K562 (cell line): ENCODE measurements at regions of chr5 and their contacts with region 1.

Region 1: DNA sequence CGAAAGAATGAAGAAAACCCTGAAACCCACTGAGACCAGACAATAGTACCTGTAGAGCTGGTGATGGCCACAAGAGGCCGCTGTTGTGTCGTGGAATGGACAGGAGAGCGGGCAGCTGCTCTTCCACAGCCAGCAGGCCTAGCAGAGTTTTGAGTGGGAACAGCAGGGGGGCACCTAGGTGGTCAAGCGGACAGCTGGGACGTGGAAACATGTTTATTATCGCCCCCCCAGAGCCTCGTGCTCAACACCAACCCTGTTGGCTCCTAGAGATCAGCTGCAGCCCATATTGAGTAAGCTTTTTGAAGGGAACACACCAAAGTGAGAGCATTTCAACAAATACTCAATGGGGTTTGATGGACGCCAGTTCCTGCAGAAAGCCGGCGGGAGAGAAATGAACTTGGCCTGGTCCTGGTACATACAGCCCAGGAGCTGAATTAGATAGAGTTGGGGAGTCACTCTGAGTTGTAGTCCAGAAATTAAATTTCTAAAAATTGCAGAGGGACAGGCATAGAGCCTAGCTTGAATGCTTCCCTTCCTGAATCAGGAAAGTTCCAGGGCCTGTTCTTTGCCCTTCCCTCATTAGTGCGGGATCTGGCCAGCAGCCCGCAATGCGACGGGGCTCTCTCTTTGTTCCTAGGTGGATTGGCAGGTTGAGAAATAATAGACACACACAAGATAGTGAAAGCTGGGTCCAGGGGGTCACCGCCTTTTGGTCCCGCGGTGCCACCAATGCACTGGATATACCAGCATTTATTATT is 33.8 kb downstream of the MFAP3 start:
- DNase-seq: peak; percentile 83 to 86 (median 84)
- ATAC-seq: peak; percentile 98
- H3K4me3 ChIP-seq: no peak overlapping the region
- H3K27ac ChIP-seq: no peak overlapping the region
- H3K4me1 ChIP-seq: no peaks in the 10 kb centered on the region; a peak in 1 of 5 replicates
- H3K27me3 ChIP-seq: no peaks in the 10 kb centered on the region; a peak in 1 of 5 replicates
- CTCF ChIP-seq: peak; percentile 93 to 97 (median 96)
- EP300 ChIP-seq: no peak
- POLR2A ChIP-seq: no peak
- RAD21 ChIP-seq: peak; percentile 96 to 97

Region 2: DNA sequence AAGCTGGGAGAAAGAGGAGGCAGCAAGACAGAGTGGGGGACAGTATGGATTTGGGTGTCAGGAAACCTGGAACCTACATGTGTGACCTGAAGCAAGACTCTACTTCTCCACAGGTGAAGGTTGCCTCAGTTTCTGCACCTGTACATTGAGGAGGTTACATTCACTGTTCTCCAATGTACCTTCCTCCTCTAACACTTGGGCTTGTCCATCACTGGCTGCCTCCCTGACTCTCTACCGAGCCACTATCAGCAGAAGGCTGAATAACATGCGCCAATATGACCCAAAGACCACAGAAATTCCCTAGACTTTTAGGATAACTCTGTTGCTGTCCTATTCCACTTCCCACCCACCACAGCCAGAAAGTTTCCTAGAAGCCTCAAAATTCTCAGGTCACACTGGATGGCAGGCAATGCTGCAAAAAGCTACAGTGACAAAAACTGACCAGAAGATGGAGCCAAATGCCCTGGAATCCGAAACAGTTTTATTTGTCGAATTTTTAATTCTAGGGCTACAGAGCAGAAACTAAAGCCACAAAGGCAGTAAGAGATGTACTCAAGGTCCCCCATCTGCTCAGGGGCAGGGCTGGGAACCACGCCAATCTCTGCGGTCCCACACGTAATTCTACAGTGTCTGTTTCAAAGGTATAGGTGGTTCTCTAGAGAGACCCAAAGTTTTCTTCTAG is 98.3 kb before region 1 on chr5:
- CTCF ChIA-PET with region 1: no interaction called
- POLR2A ChIA-PET with region 1: no interaction called
- in situ Hi-C with region 1: no loop called
- intact Hi-C with region 1: loop called (anchors 1 kb)
- DNase-seq: peak; percentile 38 to 60 (median 48)
- ATAC-seq: peak; percentile 78
- H3K4me3 ChIP-seq: no peak overlapping the region
- H3K27ac ChIP-seq: no peak overlapping the region
- H3K4me1 ChIP-seq: peaks cover 0 to 27% of the 10 kb centered on the region in 2 experiments; a peak in 3 of 5 replicates
- H3K27me3 ChIP-seq: peaks cover 1 to 3% of the 10 kb centered on the region in 2 experiments; a peak in 2 of 5 replicates
- CTCF ChIP-seq: peak; percentile 62 to 92 (median 76)
- EP300 ChIP-seq: no peak
- POLR2A ChIP-seq: no peak
- RAD21 ChIP-seq: peak; percentile 85 to 90

Region 3: DNA sequence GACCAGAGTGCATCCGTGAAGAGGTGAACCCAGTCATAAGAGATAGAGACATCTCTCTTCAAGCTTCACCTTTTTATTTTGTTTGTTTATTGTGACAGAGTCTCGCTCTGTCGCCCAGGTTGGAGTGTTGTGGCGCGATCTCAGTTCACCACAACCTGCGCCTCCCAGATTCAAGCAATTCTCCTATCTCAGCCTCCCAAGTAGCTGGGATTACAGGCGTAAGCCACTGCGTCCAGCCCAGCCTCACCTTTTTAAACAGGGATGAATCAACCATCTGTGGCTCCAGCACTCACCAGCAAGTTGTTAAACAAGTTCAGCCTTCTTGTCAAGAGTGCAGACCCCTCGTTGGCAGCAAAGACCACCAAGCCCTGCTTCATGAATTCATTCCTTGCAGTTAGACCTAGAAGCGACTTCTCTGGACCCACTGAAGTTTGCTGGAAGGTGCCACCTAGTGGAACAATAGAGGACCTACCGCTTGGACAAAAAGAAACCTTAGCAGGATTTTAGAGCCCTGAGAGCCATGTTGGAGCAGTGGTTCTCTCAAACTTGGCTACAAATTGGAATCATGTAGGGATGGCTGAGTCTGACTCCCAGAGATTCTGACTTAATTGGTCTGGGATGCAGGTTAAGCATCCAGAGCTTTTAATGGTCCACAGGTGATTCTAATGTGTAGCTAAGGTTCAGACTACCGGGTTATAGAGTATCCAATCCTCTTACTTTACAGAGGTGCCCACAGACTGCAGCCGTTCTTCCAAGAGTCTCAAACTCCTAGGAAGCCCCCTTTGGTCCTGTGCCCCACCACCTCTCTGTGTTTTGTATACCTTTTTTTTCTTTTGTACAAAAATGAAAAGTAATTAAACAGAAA is 107.5 kb after region 1 on chr5:
- CTCF ChIA-PET with region 1: interaction called, 7 read pairs
- POLR2A ChIA-PET with region 1: no interaction called
- in situ Hi-C with region 1: no loop called
- intact Hi-C with region 1: loop called (anchors 1 kb)
- DNase-seq: peak; percentile 62 to 67 (median 65)
- ATAC-seq: peak; percentile 98
- H3K4me3 ChIP-seq: no peak overlapping the region
- H3K27ac ChIP-seq: no peak overlapping the region
- H3K4me1 ChIP-seq: no peaks in the 10 kb centered on the region
- H3K27me3 ChIP-seq: peaks cover 5 to 21% of the 10 kb centered on the region in 2 experiments
- CTCF ChIP-seq: peak; percentile 79 to 82 (median 80)
- EP300 ChIP-seq: no peak
- POLR2A ChIP-seq: no peak
- RAD21 ChIP-seq: peak; percentile 76 to 79

Region 4: DNA sequence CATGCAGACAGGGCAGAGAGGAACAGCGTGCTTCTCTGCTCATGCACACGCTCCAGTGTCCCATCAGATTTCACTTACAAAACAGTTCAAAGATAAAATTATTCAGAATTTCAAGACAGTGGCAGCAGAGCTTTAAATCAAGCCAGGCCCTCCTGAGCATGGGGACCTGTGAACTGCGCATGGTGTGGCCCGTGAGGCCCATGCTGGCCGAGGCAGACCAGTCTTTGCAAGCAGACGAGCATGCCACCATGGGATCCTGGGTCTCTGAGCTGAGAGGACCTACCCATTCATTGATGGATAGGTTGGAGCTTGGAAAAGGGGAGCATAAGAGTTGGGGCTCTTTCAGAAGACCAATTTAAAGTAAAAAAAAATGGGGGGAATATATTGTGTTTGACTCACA is 338.2 kb after region 1 on chr5:
- CTCF ChIA-PET with region 1: interaction called, 13 read pairs
- POLR2A ChIA-PET with region 1: no interaction called
- in situ Hi-C with region 1: loop called (anchors 5 kb)
- intact Hi-C with region 1: loop called (anchors 1 kb)
- DNase-seq: no peak
- ATAC-seq: no peak
- H3K4me3 ChIP-seq: no peak overlapping the region
- H3K27ac ChIP-seq: no peak overlapping the region
- H3K4me1 ChIP-seq: no peaks in the 10 kb centered on the region; a peak in 1 of 5 replicates
- H3K27me3 ChIP-seq: no peaks in the 10 kb centered on the region
- CTCF ChIP-seq: no peak
- EP300 ChIP-seq: no peak
- POLR2A ChIP-seq: no peak
- RAD21 ChIP-seq: no peak

Region 5: DNA sequence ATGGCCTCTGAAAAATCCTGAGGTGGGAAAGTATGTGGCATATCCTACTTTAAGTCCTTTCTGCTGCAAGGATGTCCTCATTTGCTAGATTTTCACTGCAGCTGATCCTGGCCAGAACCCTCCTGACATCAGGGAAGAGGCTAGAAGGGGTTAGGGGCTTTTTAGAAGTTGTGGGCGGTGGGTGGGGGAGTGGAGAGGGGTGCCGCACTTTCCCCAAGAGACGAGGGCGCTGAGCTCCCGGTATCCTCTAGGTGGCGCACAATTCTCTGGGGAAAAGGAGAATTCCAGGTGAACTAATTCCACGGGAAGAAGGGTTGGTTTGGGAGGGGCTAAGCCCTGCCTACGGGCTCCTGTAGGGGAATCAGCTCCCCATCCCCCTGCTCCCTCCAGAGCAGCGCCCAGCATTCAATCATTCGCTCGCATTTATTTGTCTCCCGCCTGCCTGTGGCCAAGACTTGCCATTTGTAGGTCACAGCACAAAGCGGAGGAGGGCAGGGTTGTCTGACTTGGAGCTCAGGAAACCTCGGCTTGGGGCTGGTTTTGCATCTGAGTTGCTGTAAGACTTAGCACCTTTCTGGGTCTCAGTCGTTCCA is 448.4 kb after region 1 on chr5:
- CTCF ChIA-PET with region 1: no interaction called
- POLR2A ChIA-PET with region 1: no interaction called
- in situ Hi-C with region 1: no loop called
- intact Hi-C with region 1: loop called (anchors 10 kb)
- DNase-seq: peak; percentile 42 to 68 (median 60)
- ATAC-seq: peak; percentile 66
- H3K4me3 ChIP-seq: no peak overlapping the region
- H3K27ac ChIP-seq: no peak overlapping the region
- H3K4me1 ChIP-seq: peaks cover 12 to 27% of the 10 kb centered on the region in 2 experiments; a peak in 4 of 5 replicates
- H3K27me3 ChIP-seq: peaks cover 12 to 37% of the 10 kb centered on the region in 2 experiments; a peak in 4 of 5 replicates
- CTCF ChIP-seq: peak; percentile 63 to 89 (median 68)
- EP300 ChIP-seq: no peak
- POLR2A ChIP-seq: no peak
- RAD21 ChIP-seq: peak in 1 of 2 experiments; percentile 41; a peak in 2 of 4 replicates

Region 6: GRCh38 chr5:154610321-154611154 is 537.9 kb after region 1 on chr5:
- CTCF ChIA-PET with region 1: interaction called, 3 read pairs
- POLR2A ChIA-PET with region 1: no interaction called
- in situ Hi-C with region 1: loop called (anchors 10 kb)
- intact Hi-C with region 1: loop called (anchors 1 kb)
- DNase-seq: peak; percentile 83 to 89 (median 86)
- ATAC-seq: peak; percentile 98
- H3K4me3 ChIP-seq: no peak overlapping the region
- H3K27ac ChIP-seq: no peak overlapping the region
- H3K4me1 ChIP-seq: peaks cover 0 to 18% of the 10 kb centered on the region in 2 experiments; a peak in 2 of 5 replicates
- H3K27me3 ChIP-seq: peaks cover 30 to 59% of the 10 kb centered on the region in 2 experiments
- CTCF ChIP-seq: peak; percentile 92 to 97 (median 96)
- EP300 ChIP-seq: no peak
- POLR2A ChIP-seq: no peak
- RAD21 ChIP-seq: peak; percentile 92 to 96